ENCODE measurements at regions of chrX and their contacts with region 1.

Region 1: GRCh38 chrX:30735839-30736238 is 82.6 kb downstream of the GK start:
- DNase-seq: peak; percentile 84
- H3K4me3 Mint-ChIP-seq: no peak overlapping the region
- H3K27ac Mint-ChIP-seq: no peak overlapping the region
- H3K4me1 Mint-ChIP-seq: peaks cover 2% of the 10 kb centered on the region
- H3K27me3 Mint-ChIP-seq: no peaks in the 10 kb centered on the region

Region 2: GRCh38 chrX:30822068-30822681 is 86.3 kb after region 1 on chrX:
- CTCF ChIA-PET with region 1: interaction called, 10 read pairs
- DNase-seq: no peak
- H3K4me3 Mint-ChIP-seq: no peak overlapping the region
- H3K27ac Mint-ChIP-seq: no peak overlapping the region
- H3K4me1 Mint-ChIP-seq: peaks cover 29% of the 10 kb centered on the region
- H3K27me3 Mint-ChIP-seq: peaks cover 6% of the 10 kb centered on the region

Region 3: GRCh38 chrX:30865015-30865414 is 129.2 kb after region 1 on chrX:
- CTCF ChIA-PET with region 1: interaction called, 10 read pairs
- DNase-seq: peak; percentile 22
- H3K4me3 Mint-ChIP-seq: no peak overlapping the region
- H3K27ac Mint-ChIP-seq: no peak overlapping the region
- H3K4me1 Mint-ChIP-seq: peaks cover 10% of the 10 kb centered on the region
- H3K27me3 Mint-ChIP-seq: no peaks in the 10 kb centered on the region

Measured in activated naive CD4-positive, alpha-beta T cell treated with anti-CD3 and anti-CD28 coated beads, Interleukin-2, amount 10 ng/mL, durations not matched to agents 7 days and 5 days (primary cell).